Activated naive CD4-positive, alpha-beta T cell treated with anti-CD3 and anti-CD28 coated beads for 36 hours (primary cell): ENCODE measurements at regions of chr4 and their contacts with region 1.

Region 1: DNA sequence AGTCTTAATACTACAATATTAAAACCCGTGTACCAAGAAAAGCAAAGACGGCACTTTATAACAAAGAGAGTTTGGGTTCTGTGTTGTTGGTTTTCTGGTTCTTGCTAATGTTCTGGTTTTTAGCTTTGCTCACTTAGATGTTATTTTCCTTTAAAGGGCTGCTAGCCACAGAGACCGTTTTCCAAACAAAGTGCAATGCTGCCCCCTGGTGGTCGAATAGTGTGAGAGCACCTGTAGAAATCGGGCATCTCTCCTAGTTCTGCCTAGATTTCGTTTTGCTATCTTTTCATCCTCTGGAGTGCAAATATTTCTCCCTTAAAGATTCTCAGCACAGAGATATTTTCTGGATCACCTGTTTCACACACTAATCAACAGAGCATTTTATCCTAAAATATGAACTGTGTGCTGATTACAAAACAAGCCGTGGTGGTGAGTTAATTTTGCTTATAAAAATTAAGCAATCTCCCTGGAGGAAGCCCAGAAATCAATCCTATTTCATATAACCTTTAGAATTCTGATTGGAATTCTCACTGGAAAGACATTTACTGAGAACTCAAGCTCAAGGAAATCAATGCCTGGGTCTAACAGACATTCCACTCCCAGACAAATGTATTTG is 334.5 kb upstream of the NOCT start:
- DNase-seq: peak; percentile 86
- H3K4me3 Mint-ChIP-seq: no peak overlapping the region
- H3K27ac Mint-ChIP-seq: no peak overlapping the region
- H3K4me1 Mint-ChIP-seq: no peaks in the 10 kb centered on the region
- H3K27me3 Mint-ChIP-seq: peaks cover 22% of the 10 kb centered on the region

Region 2: DNA sequence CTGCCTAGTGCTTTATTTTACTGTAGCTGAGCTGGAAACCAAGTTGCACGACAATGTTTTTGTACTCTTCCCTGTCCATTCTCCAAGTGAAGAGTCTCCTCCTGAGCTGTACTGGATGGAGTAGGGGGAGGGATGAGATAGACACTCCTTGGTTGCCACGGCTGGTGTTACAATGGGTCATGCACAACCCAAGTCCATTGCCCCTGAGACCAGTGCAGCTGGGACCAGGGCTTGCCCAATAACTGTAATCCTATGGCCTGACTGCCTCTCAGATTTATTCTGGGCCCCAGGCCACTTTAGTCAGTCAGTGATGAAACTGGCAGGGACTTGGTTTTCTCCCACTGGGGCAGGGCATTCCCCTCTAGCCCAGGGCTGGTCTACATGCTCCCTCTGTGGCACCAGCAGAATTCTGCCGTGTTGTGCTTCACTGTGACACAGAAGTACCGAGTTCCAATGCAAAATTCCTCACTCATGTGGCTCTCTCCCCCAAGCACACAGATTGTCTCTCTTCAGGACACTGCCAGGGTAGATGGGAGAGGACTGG is 945.5 kb before region 1 on chr4:
- CTCF ChIA-PET with region 1: no interaction called
- intact Hi-C with region 1: loop called (anchors 10 kb)
- DNase-seq: no peak
- H3K4me3 Mint-ChIP-seq: no peak overlapping the region
- H3K27ac Mint-ChIP-seq: no peak overlapping the region
- H3K4me1 Mint-ChIP-seq: no peaks in the 10 kb centered on the region
- H3K27me3 Mint-ChIP-seq: no peaks in the 10 kb centered on the region

Region 3: GRCh38 chr4:138035781-138036258 is 645.3 kb before region 1 on chr4:
- CTCF ChIA-PET with region 1: interaction called, 4 read pairs
- intact Hi-C with region 1: loop called (anchors 1 kb)
- DNase-seq: no peak
- H3K4me3 Mint-ChIP-seq: no peak overlapping the region
- H3K27ac Mint-ChIP-seq: no peak overlapping the region
- H3K4me1 Mint-ChIP-seq: no peaks in the 10 kb centered on the region
- H3K27me3 Mint-ChIP-seq: no peaks in the 10 kb centered on the region

Region 4: DNA sequence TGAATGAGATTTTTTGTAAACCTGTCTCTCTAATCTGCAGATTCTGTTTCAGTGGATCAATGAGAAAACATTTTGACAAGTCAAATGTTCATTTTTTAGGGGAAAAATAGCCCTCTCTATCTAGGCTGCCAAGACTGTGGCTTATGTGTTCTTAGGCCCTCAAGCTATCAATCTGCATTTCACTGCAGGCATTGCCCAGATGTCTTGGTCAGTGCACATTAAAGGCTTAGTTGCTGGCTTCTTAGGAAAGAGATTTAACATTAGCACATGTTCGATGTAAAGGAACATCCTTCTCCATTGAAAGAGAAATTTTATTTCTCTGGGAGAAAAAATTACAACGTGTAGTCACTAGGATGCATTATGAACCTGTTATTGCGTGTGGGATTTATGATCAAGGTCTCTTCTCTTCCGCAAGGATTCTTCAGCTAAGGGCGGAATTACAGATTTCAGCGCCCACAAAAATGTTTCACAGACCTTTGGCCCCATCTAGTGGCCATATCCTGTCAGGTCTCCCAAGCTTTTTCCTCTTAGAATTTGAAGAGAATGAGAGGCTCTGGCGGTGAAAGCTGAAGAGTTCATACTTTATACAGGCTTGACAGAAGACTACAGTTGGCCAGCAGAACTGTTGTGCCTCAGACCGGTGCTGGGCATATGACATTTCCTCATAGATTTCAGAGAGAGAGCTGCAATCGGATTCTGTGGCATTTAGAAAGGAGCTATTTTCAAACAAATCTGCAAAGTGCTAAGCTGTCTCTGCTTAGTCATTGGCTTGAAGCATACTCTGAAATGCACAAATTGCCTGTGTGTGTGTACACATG is 189.8 kb after region 1 on chr4:
- CTCF ChIA-PET with region 1: interaction called, 12 read pairs
- intact Hi-C with region 1: loop called (anchors 1 kb)
- DNase-seq: peak; percentile 69
- H3K4me3 Mint-ChIP-seq: no peak overlapping the region
- H3K27ac Mint-ChIP-seq: no peak overlapping the region
- H3K4me1 Mint-ChIP-seq: no peaks in the 10 kb centered on the region
- H3K27me3 Mint-ChIP-seq: peaks cover 9% of the 10 kb centered on the region

Region 5: DNA sequence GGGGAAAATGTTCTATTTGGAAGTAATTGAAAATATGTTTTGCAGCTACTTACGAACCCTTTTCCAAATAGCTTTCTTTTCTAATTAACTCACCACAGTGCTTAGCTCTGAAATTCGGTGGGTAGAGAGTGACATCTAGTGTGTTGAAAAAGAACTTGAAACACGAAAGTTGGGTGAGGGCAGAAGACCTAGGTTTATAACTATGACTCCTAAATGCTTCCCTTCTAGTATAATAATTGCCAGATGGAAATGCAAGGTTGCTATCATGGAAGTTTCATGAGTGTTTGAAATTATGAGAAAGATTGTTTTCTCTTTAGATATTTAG is 257.2 kb after region 1 on chr4:
- CTCF ChIA-PET with region 1: interaction called, 3 read pairs
- intact Hi-C with region 1: loop called (anchors 2 kb)
- DNase-seq: no peak
- H3K4me3 Mint-ChIP-seq: no peak overlapping the region
- H3K27ac Mint-ChIP-seq: no peak overlapping the region
- H3K4me1 Mint-ChIP-seq: no peaks in the 10 kb centered on the region
- H3K27me3 Mint-ChIP-seq: peaks cover 2% of the 10 kb centered on the region